ENCODE measurements at regions of chr6 and their contacts with region 1.

Region 1: DNA sequence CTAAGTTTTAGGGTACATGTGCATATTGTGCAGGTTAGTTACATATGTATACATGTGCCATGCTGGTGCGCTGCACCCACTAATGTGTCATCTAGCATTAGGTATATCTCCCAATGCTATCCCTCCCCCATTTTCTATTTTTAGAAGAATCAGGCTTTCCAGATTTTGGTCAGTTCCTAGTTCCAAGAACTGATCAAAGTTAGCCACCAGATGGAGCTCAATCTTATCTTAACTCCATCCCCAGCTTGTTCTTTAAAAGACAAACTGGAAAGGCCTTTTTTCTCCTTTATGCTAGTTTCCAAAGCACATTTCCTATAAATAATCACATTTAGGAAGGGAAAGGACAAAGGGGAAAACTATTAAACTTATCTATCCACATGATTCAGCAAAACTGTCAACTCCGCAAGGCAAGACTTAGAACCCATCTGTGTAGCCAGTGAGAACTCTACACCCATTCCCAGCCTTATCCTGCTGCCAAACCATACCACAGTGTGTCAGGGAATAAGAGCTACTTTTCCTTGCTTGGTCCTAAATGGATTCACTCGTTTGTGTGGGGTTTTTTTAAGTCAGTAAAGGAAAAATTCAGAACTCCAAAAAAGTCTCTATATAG is 22.8 kb upstream of the KHDC1 start:
- DNase-seq: peak in 1 of 2 experiments; percentile 43
- H3K4me3 ChIP-seq: no peak overlapping the region
- H3K27ac ChIP-seq: no peak overlapping the region
- H3K4me1 ChIP-seq: no peaks in the 10 kb centered on the region
- H3K27me3 ChIP-seq: no peaks in the 10 kb centered on the region
- CTCF ChIP-seq: peak; percentile 66

Region 2: GRCh38 chr6:72873433-72873832 is 412.3 kb before region 1 on chr6:
- CTCF ChIA-PET with region 1: no interaction called
- POLR2A ChIA-PET with region 1: no interaction called
- intact Hi-C with region 1: no loop called
- DNase-seq: no peak
- H3K4me3 ChIP-seq: no peak overlapping the region
- H3K27ac ChIP-seq: no peak overlapping the region
- H3K4me1 ChIP-seq: no peaks in the 10 kb centered on the region
- H3K27me3 ChIP-seq: no peaks in the 10 kb centered on the region
- CTCF ChIP-seq: no peak

Region 3: DNA sequence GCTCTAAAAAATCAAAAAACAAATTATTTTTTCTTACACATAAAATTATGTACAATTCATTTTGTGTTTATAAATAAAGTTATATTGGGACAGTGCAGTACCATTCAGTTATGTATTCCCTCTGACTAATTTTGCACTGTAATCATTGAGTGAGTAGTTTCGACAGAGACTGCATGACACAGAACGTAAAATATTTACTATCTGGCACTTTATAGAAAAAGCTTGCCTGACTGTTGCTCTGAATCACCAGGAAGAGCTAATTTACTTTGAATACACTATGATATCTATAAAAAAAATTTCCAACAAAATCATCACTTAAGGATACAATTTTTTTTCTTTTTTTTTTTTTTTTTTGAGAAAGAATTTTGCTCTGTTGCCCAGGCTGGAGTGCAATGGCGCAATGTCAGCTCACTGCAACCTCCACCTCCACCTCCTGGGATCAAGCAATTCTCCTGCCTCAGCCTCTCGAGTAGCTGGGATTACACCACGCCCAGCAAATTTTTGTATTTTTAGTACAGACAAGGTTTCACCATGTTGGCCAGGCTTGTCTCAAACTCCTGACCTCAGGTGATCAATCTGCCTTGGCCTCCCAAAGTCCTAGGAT is 49.5 kb before region 1 on chr6:
- CTCF ChIA-PET with region 1: no interaction called
- POLR2A ChIA-PET with region 1: interaction called, 15 read pairs
- intact Hi-C with region 1: no loop called
- DNase-seq: peak in 1 of 2 experiments; percentile 79
- H3K4me3 ChIP-seq: no peak overlapping the region
- H3K27ac ChIP-seq: peak overlapping the region; percentile 74
- H3K4me1 ChIP-seq: peaks cover 4% of the 10 kb centered on the region; the same call in 1 of the 2 replicates
- H3K27me3 ChIP-seq: no peaks in the 10 kb centered on the region
- CTCF ChIP-seq: no peak

Region 4: DNA sequence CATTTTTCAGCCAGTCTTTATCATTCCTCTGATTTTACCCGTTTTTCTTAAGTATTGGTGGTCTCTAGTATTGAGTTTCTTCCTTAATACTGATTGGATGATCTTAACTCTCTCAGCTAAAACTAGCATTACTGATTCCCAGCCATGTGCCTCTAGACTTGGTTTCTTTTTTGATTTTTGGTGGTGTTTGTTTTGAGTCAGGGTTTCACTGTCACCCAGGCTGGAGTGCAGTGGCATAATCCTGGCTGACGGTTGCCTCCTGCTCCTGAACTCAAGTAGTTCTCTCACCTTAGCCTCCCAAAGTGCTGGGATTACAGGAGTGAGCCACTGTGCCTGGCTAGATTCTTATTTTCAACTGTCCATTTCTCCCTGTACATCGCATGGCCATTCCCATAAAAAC is 43.4 kb after region 1 on chr6:
- CTCF ChIA-PET with region 1: interaction called, 13 read pairs
- POLR2A ChIA-PET with region 1: no interaction called
- intact Hi-C with region 1: loop called (anchors 2 kb)
- DNase-seq: no peak
- H3K4me3 ChIP-seq: no peak overlapping the region
- H3K27ac ChIP-seq: no peak overlapping the region
- H3K4me1 ChIP-seq: no peaks in the 10 kb centered on the region
- H3K27me3 ChIP-seq: no peaks in the 10 kb centered on the region
- CTCF ChIP-seq: no peak

Region 5: GRCh38 chr6:73388800-73389512 is 103.2 kb after region 1 on chr6:
- CTCF ChIA-PET with region 1: interaction called, 7 read pairs
- POLR2A ChIA-PET with region 1: no interaction called
- intact Hi-C with region 1: loop called (anchors 5 kb)
- DNase-seq: peak; percentile 86 to 87
- H3K4me3 ChIP-seq: peak overlapping the region; percentile 58
- H3K27ac ChIP-seq: peak overlapping the region; percentile 78
- H3K4me1 ChIP-seq: peaks cover 31% of the 10 kb centered on the region
- H3K27me3 ChIP-seq: no peaks in the 10 kb centered on the region
- CTCF ChIP-seq: peak; percentile 77

Region 6: DNA sequence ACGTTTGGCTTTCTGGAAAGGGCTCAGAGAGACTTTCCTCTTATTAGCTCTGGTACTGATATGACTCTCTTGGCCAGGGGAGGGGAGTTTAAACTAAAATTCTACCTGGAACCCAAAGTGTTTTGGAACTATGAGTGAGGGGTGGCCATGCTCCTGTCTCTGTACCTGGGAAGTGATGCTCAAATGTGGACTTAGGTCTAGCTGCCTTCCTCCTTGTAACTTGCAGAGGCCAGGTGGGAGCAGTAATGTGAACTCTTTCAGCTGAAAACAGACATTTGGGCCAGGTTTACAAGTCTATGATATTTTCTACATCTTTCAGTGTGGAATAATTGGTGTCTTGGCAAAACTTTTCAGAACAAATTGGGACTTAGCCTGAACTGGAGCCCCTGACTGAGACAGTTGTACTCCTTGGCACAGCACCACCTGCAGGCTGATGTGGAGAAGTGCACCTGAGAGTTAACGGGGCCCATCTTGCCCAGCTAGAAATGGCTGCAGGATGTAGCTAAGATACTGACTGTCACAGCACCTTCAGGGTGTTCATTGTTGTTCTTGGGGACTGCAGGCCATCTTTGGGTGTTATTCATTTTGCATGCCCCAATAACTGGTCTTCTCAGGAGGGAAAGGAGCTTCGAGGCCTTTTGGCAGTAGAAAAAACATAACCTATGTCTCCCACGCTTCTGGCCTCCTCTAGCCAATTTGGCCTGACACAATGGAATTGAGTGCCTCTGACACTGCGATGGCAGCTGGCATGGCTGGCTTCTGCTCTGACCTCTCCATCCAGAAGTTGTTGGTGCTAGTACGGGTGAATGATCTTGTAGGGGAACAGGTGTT is 447.3 kb after region 1 on chr6:
- CTCF ChIA-PET with region 1: no interaction called
- POLR2A ChIA-PET with region 1: no interaction called
- intact Hi-C with region 1: loop called (anchors 5 kb)
- DNase-seq: peak; percentile 48 to 65
- H3K4me3 ChIP-seq: no peak overlapping the region
- H3K27ac ChIP-seq: no peak overlapping the region
- H3K4me1 ChIP-seq: no peaks in the 10 kb centered on the region
- H3K27me3 ChIP-seq: no peaks in the 10 kb centered on the region
- CTCF ChIP-seq: peak; percentile 95

Measured in PC-9 (cell line).